Activated T-helper 2 cell treated with anti-CD3 and anti-CD28 coated beads, Interferon-gamma antibody, Interleukin-2, Interleukin-4, amounts not matched to agents 10 μg/mL and 5 μg/mL and 100 μg/mL, durations not matched to agents 14 hours and 24 hours and 36 hours (primary cell): ENCODE measurements at regions of chr17 and their contacts with region 1.

Region 1: DNA sequence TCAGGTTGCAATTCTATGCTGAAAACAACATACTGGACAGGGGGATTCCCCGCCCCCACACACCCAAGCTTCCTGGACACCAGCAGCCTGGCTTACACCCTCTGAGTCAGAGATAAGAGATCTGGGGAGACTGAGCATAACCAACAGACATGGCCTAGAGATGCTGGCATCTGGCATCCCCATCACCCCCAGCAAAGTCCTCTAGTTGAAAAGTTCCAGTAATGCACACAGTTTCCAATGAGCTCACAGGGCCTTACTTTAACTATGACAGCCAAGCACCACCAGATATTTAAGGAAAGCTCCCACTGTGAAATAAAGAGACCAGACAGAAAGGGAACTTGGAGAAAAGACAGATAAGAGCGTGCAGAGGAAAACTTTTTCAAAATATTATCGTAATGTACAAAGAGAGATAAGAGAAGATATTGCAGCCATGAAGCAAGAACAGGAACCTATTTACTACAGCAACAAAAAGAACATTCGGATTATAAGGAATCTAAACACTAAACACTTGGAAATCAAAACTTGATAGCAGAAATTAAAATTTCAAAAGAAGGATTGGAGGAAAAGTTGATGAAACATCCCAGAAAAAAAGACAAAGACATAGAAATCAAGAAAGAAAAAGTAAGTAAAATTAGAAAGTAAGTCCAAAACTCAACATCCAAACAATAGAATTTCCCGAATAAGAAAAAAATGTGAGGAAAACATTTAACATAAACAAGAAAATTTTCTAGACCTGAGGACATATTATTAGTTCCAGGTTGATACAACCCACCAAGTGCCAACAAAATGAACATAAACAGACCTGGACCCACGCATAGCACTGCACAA is 17.2 kb upstream of the ALOX15 start:
- DNase-seq: no peak
- H3K4me3 Mint-ChIP-seq: peak overlapping the region; percentile 15
- H3K27ac Mint-ChIP-seq: peak overlapping the region; percentile 87
- H3K4me1 Mint-ChIP-seq: peaks cover 24% of the 10 kb centered on the region
- H3K27me3 Mint-ChIP-seq: peaks cover 2% of the 10 kb centered on the region

Region 2: GRCh38 chr17:4641297-4642195 is 17.1 kb before region 1 on chr17 and contains the start of gene ALOX15:
- intact Hi-C with region 1: no loop called
- DNase-seq: no peak
- H3K4me3 Mint-ChIP-seq: no peak within 1 kb of the TSS
- H3K27ac Mint-ChIP-seq: no peak within 1 kb of the TSS
- H3K4me1 Mint-ChIP-seq: peaks cover 14% of the 10 kb centered on the region
- H3K27me3 Mint-ChIP-seq: peaks cover 75% of the 10 kb centered on the region
- total RNA-seq, gene ALOX15: not detected in 2 replicates

Region 3: GRCh38 chr17:4678427-4679026 is 19.8 kb after region 1 on chr17:
- intact Hi-C with region 1: loop called (anchors 2 kb)
- DNase-seq: no peak
- H3K4me3 Mint-ChIP-seq: no peak overlapping the region
- H3K27ac Mint-ChIP-seq: no peak overlapping the region
- H3K4me1 Mint-ChIP-seq: peaks cover 18% of the 10 kb centered on the region
- H3K27me3 Mint-ChIP-seq: no peaks in the 10 kb centered on the region

Region 4: GRCh38 chr17:4703330-4703691 is 44.6 kb after region 1 on chr17:
- intact Hi-C with region 1: loop called (anchors 5 kb)
- DNase-seq: no peak
- H3K4me3 Mint-ChIP-seq: peak overlapping the region; percentile 84
- H3K27ac Mint-ChIP-seq: peak overlapping the region; percentile 91
- H3K4me1 Mint-ChIP-seq: peaks cover 36% of the 10 kb centered on the region
- H3K27me3 Mint-ChIP-seq: no peaks in the 10 kb centered on the region